HepG2 (cell line): ENCODE measurements at regions of chr4 and their contacts with region 1.

Region 1: GRCh38 chr4:69881173-69881773 is 21.3 kb upstream of the SULT1E1 start:
- DNase-seq: peak; percentile 66
- ATAC-seq: peak; percentile 74
- H3K4me3 ChIP-seq: no peak overlapping the region
- H3K27ac ChIP-seq: peak overlapping the region; percentile 17
- H3K4me1 ChIP-seq: peaks cover 53% of the 10 kb centered on the region
- H3K27me3 ChIP-seq: no peaks in the 10 kb centered on the region
- CTCF ChIP-seq: peak; percentile 89
- EP300 ChIP-seq: peak in 1 of 2 experiments; percentile 39; a peak in 2 of 4 replicates
- POLR2A ChIP-seq: no peak
- RAD21 ChIP-seq: peak; percentile 89

Region 2: GRCh38 chr4:69383281-69383680 is 498.0 kb before region 1 on chr4:
- CTCF ChIA-PET with region 1: no interaction called
- POLR2A ChIA-PET with region 1: no interaction called
- in situ Hi-C with region 1: no loop called
- intact Hi-C with region 1: no loop called
- DNase-seq: no peak
- ATAC-seq: no peak
- H3K4me3 ChIP-seq: no peak overlapping the region
- H3K27ac ChIP-seq: no peak overlapping the region
- H3K4me1 ChIP-seq: no peaks in the 10 kb centered on the region
- H3K27me3 ChIP-seq: peaks cover 0 to 4% of the 10 kb centered on the region in 2 experiments; a peak in 1 of 5 replicates
- CTCF ChIP-seq: no peak
- EP300 ChIP-seq: no peak
- POLR2A ChIP-seq: no peak
- RAD21 ChIP-seq: no peak

Region 3: GRCh38 chr4:69689599-69689998 is 191.7 kb before region 1 on chr4:
- CTCF ChIA-PET with region 1: interaction called, 59 read pairs
- POLR2A ChIA-PET with region 1: interaction called, 3 read pairs
- in situ Hi-C with region 1: loop called (anchors 5 kb)
- intact Hi-C with region 1: loop called (anchors 1 kb)
- DNase-seq: peak; percentile 66
- ATAC-seq: no peak
- H3K4me3 ChIP-seq: no peak overlapping the region
- H3K27ac ChIP-seq: peak overlapping the region; percentile 2
- H3K4me1 ChIP-seq: peaks cover 19% of the 10 kb centered on the region
- H3K27me3 ChIP-seq: no peaks in the 10 kb centered on the region
- CTCF ChIP-seq: peak; percentile 71
- EP300 ChIP-seq: no peak
- POLR2A ChIP-seq: no peak
- RAD21 ChIP-seq: peak; percentile 82

Region 4: GRCh38 chr4:69830560-69831289 is 50.5 kb before region 1 on chr4:
- CTCF ChIA-PET with region 1: no interaction called
- POLR2A ChIA-PET with region 1: interaction called, 24 read pairs
- in situ Hi-C with region 1: no loop called
- intact Hi-C with region 1: loop called (anchors 2 kb)
- DNase-seq: peak; percentile 81
- ATAC-seq: peak; percentile 54
- H3K4me3 ChIP-seq: no peak overlapping the region
- H3K27ac ChIP-seq: peak overlapping the region; percentile 93
- H3K4me1 ChIP-seq: peaks cover 82% of the 10 kb centered on the region
- H3K27me3 ChIP-seq: no peaks in the 10 kb centered on the region
- CTCF ChIP-seq: peak; percentile 53
- EP300 ChIP-seq: 0 out of 4 replicates have a peak, but pooled peaks of 1 of the 2 experiments have one; percentile 8
- POLR2A ChIP-seq: no peak
- RAD21 ChIP-seq: no peak

Region 5: GRCh38 chr4:70559211-70559830 is 678.0 kb after region 1 on chr4:
- CTCF ChIA-PET with region 1: no interaction called
- POLR2A ChIA-PET with region 1: no interaction called
- in situ Hi-C with region 1: no loop called
- intact Hi-C with region 1: loop called (anchors 1 kb)
- DNase-seq: peak; percentile 67
- ATAC-seq: peak; percentile 74; the same call in 2 of the 3 replicates
- H3K4me3 ChIP-seq: no peak overlapping the region
- H3K27ac ChIP-seq: no peak overlapping the region
- H3K4me1 ChIP-seq: peaks cover 28% of the 10 kb centered on the region
- H3K27me3 ChIP-seq: no peaks in the 10 kb centered on the region
- CTCF ChIP-seq: peak; percentile 81
- EP300 ChIP-seq: no peak
- POLR2A ChIP-seq: no peak
- RAD21 ChIP-seq: peak; percentile 34; the same call in 1 of the 2 replicates